Activated T-helper 1 cell treated with anti-CD3 and anti-CD28 coated beads, Interleukin-12 subunit alpha, Interleukin-12 subunit beta, Interleukin-2, Interleukin-4 antibody, amounts not matched to agents 30 ng/mL and 10 ng/mL and 1 ng/mL, durations not matched to agents 14 hours and 24 hours and 36 hours (primary cell): ENCODE measurements at regions of chr6 and their contacts with region 1.

Region 1: DNA sequence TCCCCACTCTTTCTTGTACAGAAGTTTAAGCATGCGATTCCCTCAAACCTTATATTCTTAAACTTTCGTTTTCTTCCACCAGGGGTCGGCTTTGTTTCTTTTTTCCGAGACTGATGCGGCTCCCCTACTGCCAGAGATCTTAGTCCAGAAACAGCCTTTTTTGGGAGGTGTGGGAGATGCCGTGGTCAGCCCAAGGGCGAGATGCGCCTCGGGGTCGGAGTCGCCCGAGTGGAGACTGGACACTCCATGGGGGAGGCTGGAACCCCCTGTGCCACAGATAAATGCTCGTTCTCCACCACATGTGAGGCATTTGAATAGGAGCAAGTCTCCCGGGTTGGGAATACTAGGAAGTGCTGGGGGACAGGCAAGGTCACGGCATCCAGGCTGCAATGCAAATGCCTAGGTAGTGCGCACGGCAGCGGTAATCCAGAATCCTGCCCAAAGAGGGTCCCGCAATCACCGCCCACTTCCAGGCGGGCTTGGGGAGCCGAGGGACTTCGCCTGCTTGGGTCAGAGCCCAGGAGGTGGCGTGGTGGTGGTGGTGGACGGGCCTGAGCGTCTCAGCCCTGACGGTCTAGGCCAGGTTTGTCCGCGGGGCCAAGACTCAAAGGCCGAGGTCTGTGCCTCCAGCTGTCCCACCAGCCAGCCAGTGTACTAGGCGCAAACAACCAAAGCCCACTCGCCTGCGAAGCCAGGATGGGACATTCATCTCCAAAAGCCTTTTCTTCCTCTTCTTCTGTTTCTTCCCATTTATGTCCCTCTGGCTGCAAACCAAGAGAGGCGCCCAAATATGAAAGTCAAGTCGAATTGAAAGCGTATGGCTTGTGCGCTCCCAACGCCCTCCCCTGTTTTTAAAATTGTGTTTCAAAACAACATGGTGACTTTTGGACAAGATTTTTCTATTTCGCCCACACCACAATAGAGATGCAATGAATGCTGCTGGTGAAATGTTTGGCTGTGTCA is 39.3 kb upstream of the OSTM1 start:
- DNase-seq: no peak
- H3K4me3 Mint-ChIP-seq: peak overlapping the region; percentile 48
- H3K27ac Mint-ChIP-seq: peak overlapping the region; percentile 41
- H3K4me1 Mint-ChIP-seq: peaks cover 30% of the 10 kb centered on the region
- H3K27me3 Mint-ChIP-seq: peaks cover 83% of the 10 kb centered on the region

Region 2: GRCh38 chr6:107489636-107490565 is 623.9 kb before region 1 on chr6 and contains the start of gene SOBP:
- intact Hi-C with region 1: loop called (anchors 5 kb)
- DNase-seq: peak; percentile 9
- H3K4me3 Mint-ChIP-seq: peak within 1 kb of the TSS; percentile 91
- H3K27ac Mint-ChIP-seq: peak within 1 kb of the TSS; percentile 36
- H3K4me1 Mint-ChIP-seq: peaks cover 28% of the 10 kb centered on the region
- H3K27me3 Mint-ChIP-seq: peaks cover 50% of the 10 kb centered on the region
- total RNA-seq, gene SOBP: 0.15 and 0.16 TPM in 2 replicates

Region 3: GRCh38 chr6:108163267-108163643 is 49.4 kb after region 1 on chr6:
- intact Hi-C with region 1: loop called (anchors 1 kb)
- DNase-seq: no peak
- H3K4me3 Mint-ChIP-seq: no peak overlapping the region
- H3K27ac Mint-ChIP-seq: no peak overlapping the region
- H3K4me1 Mint-ChIP-seq: peaks cover 20% of the 10 kb centered on the region
- H3K27me3 Mint-ChIP-seq: peaks cover 93% of the 10 kb centered on the region

Region 4: GRCh38 chr6:108168501-108169463 is 54.9 kb after region 1 on chr6:
- intact Hi-C with region 1: loop called (anchors 1 kb)
- DNase-seq: no peak
- H3K4me3 Mint-ChIP-seq: no peak overlapping the region
- H3K27ac Mint-ChIP-seq: peak overlapping the region; percentile 40
- H3K4me1 Mint-ChIP-seq: peaks cover 14% of the 10 kb centered on the region
- H3K27me3 Mint-ChIP-seq: peaks cover 85% of the 10 kb centered on the region

Region 5: DNA sequence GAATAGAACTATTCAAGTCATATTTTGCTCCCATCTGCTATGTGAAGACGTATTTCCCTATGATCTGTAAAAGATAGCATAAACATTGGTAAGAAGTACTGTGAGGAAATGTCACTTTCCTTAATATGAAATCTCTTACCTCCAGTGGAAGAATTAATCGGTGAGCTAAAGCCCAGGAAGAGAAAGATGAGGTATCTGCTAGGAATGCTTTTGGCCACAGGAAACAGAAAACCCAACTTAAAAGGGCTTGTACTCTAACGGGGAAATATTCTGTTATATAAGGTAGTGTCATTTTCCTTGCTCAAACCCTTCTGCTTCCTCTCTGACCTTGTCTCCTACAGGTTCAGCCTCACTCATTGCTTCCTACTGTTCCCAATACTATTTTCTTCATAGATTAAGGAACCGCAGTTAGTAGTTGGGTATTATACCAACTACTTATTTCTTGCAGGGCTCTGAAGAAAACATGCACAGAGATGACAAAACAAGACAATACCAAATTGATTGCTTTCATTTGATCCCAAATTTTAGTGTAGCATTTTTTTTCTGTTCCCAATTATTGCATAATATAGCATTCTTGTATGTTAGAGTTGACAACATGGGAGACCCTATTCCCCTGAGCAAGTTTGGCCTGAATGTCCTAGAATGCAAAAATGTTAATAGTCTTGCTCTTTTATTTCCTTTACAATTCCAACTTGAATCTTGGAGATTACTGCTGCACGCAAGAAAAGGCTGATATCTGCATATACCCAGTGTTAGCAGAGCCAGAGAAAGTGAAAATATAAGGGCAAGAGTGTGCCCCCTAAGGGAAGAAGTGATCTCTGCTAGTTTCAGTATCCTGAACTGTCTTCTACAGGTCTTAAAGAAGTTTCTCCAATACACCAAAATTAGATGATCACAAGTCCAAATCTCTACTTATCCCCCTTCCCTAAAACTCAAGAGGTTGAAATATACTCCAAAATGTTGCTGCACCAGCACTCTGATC is 246.4 kb after region 1 on chr6:
- intact Hi-C with region 1: loop called (anchors 5 kb)
- DNase-seq: no peak
- H3K4me3 Mint-ChIP-seq: no peak overlapping the region
- H3K27ac Mint-ChIP-seq: no peak overlapping the region
- H3K4me1 Mint-ChIP-seq: peaks cover 5% of the 10 kb centered on the region
- H3K27me3 Mint-ChIP-seq: no peaks in the 10 kb centered on the region

Region 6: GRCh38 chr6:108492131-108492766 is 378.4 kb after region 1 on chr6:
- intact Hi-C with region 1: loop called (anchors 1 kb)
- DNase-seq: no peak
- H3K4me3 Mint-ChIP-seq: no peak overlapping the region
- H3K27ac Mint-ChIP-seq: no peak overlapping the region
- H3K4me1 Mint-ChIP-seq: no peaks in the 10 kb centered on the region
- H3K27me3 Mint-ChIP-seq: peaks cover 9% of the 10 kb centered on the region

Region 7: DNA sequence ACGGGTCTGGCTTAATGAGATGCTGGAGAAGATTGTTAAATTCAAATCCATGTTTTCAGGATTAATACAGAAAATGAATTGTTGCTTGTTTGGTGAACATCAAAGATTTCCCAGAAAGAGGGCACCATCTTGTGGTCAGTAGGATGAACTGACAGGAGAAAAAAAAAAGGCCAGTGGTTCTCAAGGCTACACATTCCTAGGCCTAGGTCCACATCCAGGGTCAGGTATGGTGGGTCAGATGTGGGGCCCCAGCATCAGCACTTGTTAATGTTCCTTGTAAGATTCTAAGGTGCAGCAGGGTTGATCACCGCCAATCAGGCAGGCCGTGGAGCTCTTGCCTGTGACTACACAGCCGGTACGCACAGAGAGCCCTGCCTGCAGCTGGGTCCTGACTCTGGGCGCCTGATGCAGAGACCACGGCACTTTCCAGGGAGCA is 412.9 kb after region 1 on chr6:
- intact Hi-C with region 1: loop called (anchors 1 kb)
- DNase-seq: no peak
- H3K4me3 Mint-ChIP-seq: no peak overlapping the region
- H3K27ac Mint-ChIP-seq: no peak overlapping the region
- H3K4me1 Mint-ChIP-seq: no peaks in the 10 kb centered on the region
- H3K27me3 Mint-ChIP-seq: peaks cover 25% of the 10 kb centered on the region